SK-N-SH (cell line): ENCODE measurements at regions of chr2 and their contacts with region 1.

Region 1: GRCh38 chr2:1742681-1743395 is 1.5 kb downstream of the PXDN start:
- DNase-seq: peak; percentile 89
- H3K4me3 ChIP-seq: peak overlapping the region; percentile 84 to 91
- H3K27ac ChIP-seq: peak overlapping the region; percentile 95 to 98
- H3K4me1 ChIP-seq: peaks cover 30 to 57% of the 10 kb centered on the region in 2 experiments; a peak in 3 of 4 replicates
- H3K27me3 ChIP-seq: no peaks in the 10 kb centered on the region
- CTCF ChIP-seq: peak; percentile 84
- EP300 ChIP-seq: no peak; a peak in 2 of 4 replicates
- RAD21 ChIP-seq: peak; percentile 87

Region 2: GRCh38 chr2:1400943-1401735 is 341.7 kb before region 1 on chr2:
- CTCF ChIA-PET with region 1: no interaction called
- POLR2A ChIA-PET with region 1: no interaction called
- DNase-seq: no peak
- H3K4me3 ChIP-seq: no peak overlapping the region
- H3K27ac ChIP-seq: no peak overlapping the region
- H3K4me1 ChIP-seq: no peaks in the 10 kb centered on the region; a peak in 1 of 4 replicates
- H3K27me3 ChIP-seq: no peaks in the 10 kb centered on the region
- CTCF ChIP-seq: no peak
- EP300 ChIP-seq: no peak
- RAD21 ChIP-seq: no peak

Region 3: GRCh38 chr2:1625208-1625937 is 117.5 kb before region 1 on chr2:
- CTCF ChIA-PET with region 1: interaction called, 10 read pairs
- POLR2A ChIA-PET with region 1: no interaction called
- DNase-seq: peak; percentile 79
- H3K4me3 ChIP-seq: no peak overlapping the region
- H3K27ac ChIP-seq: peak overlapping the region in 1 of 2 experiments; percentile 78; a peak in 2 of 4 replicates
- H3K4me1 ChIP-seq: peaks cover 7 to 18% of the 10 kb centered on the region in 2 experiments; a peak in 2 of 4 replicates
- H3K27me3 ChIP-seq: no peaks in the 10 kb centered on the region
- CTCF ChIP-seq: no peak
- EP300 ChIP-seq: peak in 1 of 2 experiments; percentile 65; a peak in 2 of 4 replicates
- RAD21 ChIP-seq: no peak

Region 4: GRCh38 chr2:1730015-1730927 is 12.6 kb before region 1 on chr2:
- CTCF ChIA-PET with region 1: interaction called, 47 read pairs
- POLR2A ChIA-PET with region 1: interaction called, 12 read pairs
- DNase-seq: peak; percentile 64
- H3K4me3 ChIP-seq: peak overlapping the region; percentile 19 to 45; a peak in 3 of 4 replicates
- H3K27ac ChIP-seq: peak overlapping the region; percentile 98 to 100
- H3K4me1 ChIP-seq: peaks cover 47 to 62% of the 10 kb centered on the region in 2 experiments
- H3K27me3 ChIP-seq: no peaks in the 10 kb centered on the region
- CTCF ChIP-seq: no peak
- EP300 ChIP-seq: peak in 1 of 2 experiments; percentile 47; a peak in 2 of 4 replicates
- RAD21 ChIP-seq: peak; percentile 17